GM12878 (cell line): ENCODE measurements at regions of chr6 and their contacts with region 1.

Region 1: GRCh38 chr6:91453224-91453878 is 866.5 kb upstream of the MAP3K7 start:
- DNase-seq: no peak
- ATAC-seq: 0 out of 3 replicates have a peak, but pooled peaks have one; percentile 27
- H3K4me3 ChIP-seq: no peak overlapping the region
- H3K27ac ChIP-seq: no peak overlapping the region
- H3K4me1 ChIP-seq: no peaks in the 10 kb centered on the region
- H3K27me3 ChIP-seq: no peaks in the 10 kb centered on the region
- CTCF ChIP-seq: no peak
- EP300 ChIP-seq: no peak
- POLR2A ChIP-seq: no peak
- RAD21 ChIP-seq: no peak

Region 2: GRCh38 chr6:90753820-90754643 is 699.3 kb before region 1 on chr6:
- CTCF ChIA-PET with region 1: no interaction called
- POLR2A ChIA-PET with region 1: no interaction called
- RAD21 ChIA-PET with region 1: no interaction called
- SMC1A ChIA-PET with region 1: no interaction called
- in situ Hi-C with region 1: no loop called
- intact Hi-C with region 1: no loop called
- DNase-seq: no peak
- ATAC-seq: no peak
- H3K4me3 ChIP-seq: no peak overlapping the region
- H3K27ac ChIP-seq: no peak overlapping the region
- H3K4me1 ChIP-seq: no peaks in the 10 kb centered on the region
- H3K27me3 ChIP-seq: no peaks in the 10 kb centered on the region
- CTCF ChIP-seq: no peak
- EP300 ChIP-seq: no peak
- POLR2A ChIP-seq: no peak
- RAD21 ChIP-seq: no peak

Region 3: GRCh38 chr6:91442342-91442741 is 11.0 kb before region 1 on chr6:
- CTCF ChIA-PET with region 1: no interaction called
- POLR2A ChIA-PET with region 1: interaction called, 3 read pairs
- RAD21 ChIA-PET with region 1: interaction called, 3 read pairs
- SMC1A ChIA-PET with region 1: interaction called, 29 read pairs
- in situ Hi-C with region 1: no loop called
- intact Hi-C with region 1: no loop called
- DNase-seq: no peak
- ATAC-seq: peak; percentile 20; the same call in 1 of the 3 replicates
- H3K4me3 ChIP-seq: no peak overlapping the region
- H3K27ac ChIP-seq: peak overlapping the region; percentile 48
- H3K4me1 ChIP-seq: no peaks in the 10 kb centered on the region
- H3K27me3 ChIP-seq: no peaks in the 10 kb centered on the region
- CTCF ChIP-seq: no peak
- EP300 ChIP-seq: no peak
- POLR2A ChIP-seq: no peak
- RAD21 ChIP-seq: no peak

Region 4: DNA sequence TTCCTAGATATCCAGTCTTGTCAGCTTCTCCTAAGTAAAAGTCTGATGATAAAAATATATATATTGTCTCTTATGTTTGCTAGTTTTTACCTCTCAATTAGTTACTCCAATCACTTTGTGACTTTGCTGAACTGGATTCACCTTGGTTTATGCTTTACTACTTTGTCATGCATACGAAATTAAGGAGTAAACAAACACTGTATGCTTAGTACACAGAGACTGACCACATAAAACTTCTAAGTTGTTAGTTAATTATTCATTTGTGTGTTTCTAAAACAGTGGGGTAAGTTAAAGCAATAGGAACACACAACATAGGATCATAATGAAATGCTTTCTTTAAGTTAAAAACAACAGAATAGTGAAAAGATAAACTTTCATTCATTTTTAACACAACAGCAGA is 10.8 kb after region 1 on chr6:
- CTCF ChIA-PET with region 1: interaction called, 9 read pairs
- POLR2A ChIA-PET with region 1: interaction called, 5 read pairs
- RAD21 ChIA-PET with region 1: interaction called, 3 read pairs
- SMC1A ChIA-PET with region 1: interaction called, 11 read pairs
- in situ Hi-C with region 1: no loop called
- intact Hi-C with region 1: no loop called
- DNase-seq: no peak
- ATAC-seq: peak; percentile 29; the same call in 2 of the 3 replicates
- H3K4me3 ChIP-seq: no peak overlapping the region
- H3K27ac ChIP-seq: no peak overlapping the region
- H3K4me1 ChIP-seq: no peaks in the 10 kb centered on the region
- H3K27me3 ChIP-seq: no peaks in the 10 kb centered on the region
- CTCF ChIP-seq: no peak
- EP300 ChIP-seq: no peak
- POLR2A ChIP-seq: no peak
- RAD21 ChIP-seq: no peak